ENCODE measurements at regions of chr11 and their contacts with region 1.

Region 1: DNA sequence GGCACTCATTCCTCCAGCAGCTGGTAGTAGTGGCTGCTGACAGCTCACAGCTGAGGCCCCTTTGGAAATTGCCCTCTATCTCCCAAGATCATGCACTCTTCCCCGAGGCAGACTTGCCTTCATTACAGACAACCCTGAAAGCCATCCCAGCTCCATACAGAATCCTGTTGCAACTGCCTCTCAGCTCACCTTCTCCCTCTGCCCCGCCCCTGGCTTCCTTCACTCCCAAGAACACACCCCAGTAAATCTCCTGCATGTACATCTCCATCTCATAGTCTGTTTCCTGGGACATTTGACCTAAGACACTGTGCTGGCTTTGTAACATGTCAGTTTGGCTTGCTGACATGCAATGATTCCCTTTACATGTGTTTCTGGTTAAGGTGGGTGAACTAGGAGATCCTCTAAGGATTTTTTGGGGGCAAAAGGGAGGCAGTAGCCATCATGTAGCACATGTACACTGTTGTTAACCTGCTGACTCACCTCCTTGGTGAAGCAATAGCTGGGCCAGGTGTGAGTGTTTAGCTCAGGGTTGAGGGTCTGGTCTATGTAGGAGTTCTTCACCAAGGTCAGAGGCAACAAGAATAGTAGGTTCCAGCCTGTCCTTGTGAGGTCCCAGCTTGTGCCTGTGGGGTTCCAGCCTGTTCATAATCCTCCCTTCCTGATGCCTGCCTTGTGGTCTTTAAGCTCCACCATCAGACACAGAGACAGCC is 179.6 kb downstream of the CSNK2A3 start:
- DNase-seq: no peak
- ATAC-seq: no peak
- H3K4me3 Mint-ChIP-seq: no peak overlapping the region
- H3K27ac Mint-ChIP-seq: no peak overlapping the region
- H3K4me1 Mint-ChIP-seq: 0 out of 2 replicates have a peak, but pooled peaks cover 2% of the 10 kb centered on the region
- H3K27me3 Mint-ChIP-seq: no peaks in the 10 kb centered on the region
- CTCF ChIP-seq: no peak

Region 2: DNA sequence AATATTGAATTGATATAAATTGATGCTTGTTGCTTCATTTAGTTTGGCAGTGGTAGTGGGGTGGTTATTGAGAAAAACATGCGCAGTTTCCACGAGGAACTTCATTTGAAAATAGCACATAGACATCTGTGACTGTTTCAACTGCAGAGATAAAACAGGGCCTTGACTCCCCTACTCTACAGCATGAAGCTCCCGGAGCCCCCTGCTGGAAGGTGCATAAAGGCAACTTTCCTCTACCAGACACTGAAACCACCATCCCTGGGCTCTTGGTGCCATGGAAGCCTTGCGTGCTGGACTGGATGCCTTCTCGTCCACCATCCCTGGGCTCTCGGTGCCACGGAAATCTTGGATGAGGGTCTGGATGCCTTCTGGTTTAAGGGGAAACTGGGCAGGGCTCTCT is 16.3 kb before region 1 on chr11:
- CTCF ChIA-PET with region 1: interaction called, 10 read pairs
- POLR2A ChIA-PET with region 1: no interaction called
- DNase-seq: peak; percentile 67
- ATAC-seq: peak; percentile 69
- H3K4me3 Mint-ChIP-seq: no peak overlapping the region
- H3K27ac Mint-ChIP-seq: no peak overlapping the region
- H3K4me1 Mint-ChIP-seq: no peaks in the 10 kb centered on the region
- H3K27me3 Mint-ChIP-seq: peaks cover 7% of the 10 kb centered on the region; the same call in 1 of the 2 replicates
- CTCF ChIP-seq: no peak

Region 3: GRCh38 chr11:11370255-11370961 is 196.9 kb after region 1 on chr11:
- CTCF ChIA-PET with region 1: no interaction called
- POLR2A ChIA-PET with region 1: no interaction called
- DNase-seq: no peak
- ATAC-seq: no peak
- H3K4me3 Mint-ChIP-seq: no peak overlapping the region
- H3K27ac Mint-ChIP-seq: no peak overlapping the region
- H3K4me1 Mint-ChIP-seq: peaks cover 25% of the 10 kb centered on the region
- H3K27me3 Mint-ChIP-seq: peaks cover 39% of the 10 kb centered on the region
- CTCF ChIP-seq: no peak